Endothelial cell of umbilical vein (primary cell): ENCODE measurements at regions of chr9 and their contacts with region 1.

Region 1: DNA sequence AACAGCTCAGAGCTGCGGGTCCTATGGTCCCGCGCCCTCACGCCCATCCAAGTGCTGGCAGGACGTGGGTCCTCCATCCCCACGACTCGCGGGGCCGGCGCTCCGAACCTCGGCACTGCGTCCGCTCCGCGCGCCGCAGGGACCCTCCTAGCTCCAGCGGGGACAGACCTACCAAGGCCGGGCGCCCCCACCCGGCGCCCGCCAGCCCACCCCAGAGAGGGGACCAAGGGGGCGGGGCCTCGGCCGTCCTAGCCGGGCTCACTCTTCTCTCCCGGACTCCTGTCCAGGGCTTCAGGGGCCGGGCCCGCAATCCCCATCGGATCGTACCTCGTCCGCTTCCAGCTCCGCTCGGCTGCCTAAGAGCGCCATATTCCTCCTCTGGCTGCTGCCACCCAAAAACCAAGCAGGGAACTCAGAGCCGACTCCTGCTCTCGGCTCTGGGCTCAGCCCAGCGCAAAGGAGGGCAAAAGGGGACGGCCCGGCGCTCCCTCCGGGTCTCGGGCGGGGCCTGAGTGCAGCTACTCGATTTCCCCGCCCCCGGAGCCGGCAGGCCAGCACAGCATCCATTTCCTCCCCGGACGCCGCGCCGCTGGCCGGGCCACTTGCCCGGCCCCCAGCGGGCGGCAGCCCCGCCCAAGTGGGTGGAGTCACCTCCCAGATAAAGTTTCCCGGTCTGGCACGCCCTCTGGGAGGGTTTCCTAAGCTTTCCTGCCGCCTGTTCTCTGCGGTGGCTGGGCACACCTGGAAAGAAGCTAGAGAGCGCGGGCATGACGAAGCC is at the start of gene TTC39B:
- DNase-seq: peak; percentile 91
- H3K4me3 ChIP-seq: peak within 1 kb of the TSS; percentile 57 to 63 (median 59)
- H3K27ac ChIP-seq: peak within 1 kb of the TSS; percentile 14
- H3K4me1 ChIP-seq: peaks cover 4% of the 10 kb centered on the region
- H3K27me3 ChIP-seq: no peaks in the 10 kb centered on the region
- CTCF ChIP-seq: peak in 1 of 2 donors; percentile 2
- POLR2A ChIP-seq: peak; percentile 69
- total RNA-seq, gene TTC39B: 5.4 and 6.8 TPM in 2 replicates

Region 2: DNA sequence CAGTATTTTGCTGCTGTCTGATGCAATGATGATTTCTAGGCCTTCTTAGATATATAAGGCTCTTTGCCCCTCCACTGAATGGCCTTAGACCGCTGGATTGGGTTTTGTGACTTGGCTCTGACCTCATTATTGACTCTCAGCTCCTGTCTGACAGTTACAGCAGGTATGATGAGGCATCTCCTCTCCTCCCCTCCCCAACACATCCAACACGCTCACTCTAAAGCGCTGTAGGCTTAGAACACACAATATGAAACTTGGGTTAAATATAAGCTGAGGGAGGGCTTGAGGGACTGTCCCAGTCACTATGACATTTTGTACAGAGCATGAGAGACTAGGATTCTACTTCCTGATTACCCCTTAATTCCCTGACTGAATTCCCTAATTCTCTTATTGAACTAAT is 565.6 kb before region 1 on chr9:
- CTCF ChIA-PET with region 1: no interaction called
- POLR2A ChIA-PET with region 1: no interaction called
- dilution Hi-C with region 1: no loop called
- intact Hi-C with region 1: no loop called
- DNase-seq: no peak
- H3K4me3 ChIP-seq: no peak overlapping the region
- H3K27ac ChIP-seq: no peak overlapping the region
- H3K4me1 ChIP-seq: peaks cover 13% of the 10 kb centered on the region
- H3K27me3 ChIP-seq: no peaks in the 10 kb centered on the region
- CTCF ChIP-seq: no peak
- POLR2A ChIP-seq: no peak

Region 3: GRCh38 chr9:15211160-15211814 is 95.7 kb before region 1 on chr9:
- CTCF ChIA-PET with region 1: interaction called, 3 read pairs
- POLR2A ChIA-PET with region 1: no interaction called
- dilution Hi-C with region 1: no loop called
- intact Hi-C with region 1: loop called (anchors 1 kb)
- DNase-seq: peak; percentile 80
- H3K4me3 ChIP-seq: no peak overlapping the region
- H3K27ac ChIP-seq: no peak overlapping the region
- H3K4me1 ChIP-seq: peaks cover 3% of the 10 kb centered on the region
- H3K27me3 ChIP-seq: no peaks in the 10 kb centered on the region
- CTCF ChIP-seq: peak; percentile 79 to 81
- POLR2A ChIP-seq: no peak

Region 4: GRCh38 chr9:15249042-15249818 is 57.7 kb before region 1 on chr9:
- CTCF ChIA-PET with region 1: no interaction called
- POLR2A ChIA-PET with region 1: no interaction called
- dilution Hi-C with region 1: no loop called
- intact Hi-C with region 1: loop called (anchors 1 kb)
- DNase-seq: peak; percentile 69
- H3K4me3 ChIP-seq: no peak overlapping the region
- H3K27ac ChIP-seq: peak overlapping the region; percentile 68
- H3K4me1 ChIP-seq: peaks cover 42% of the 10 kb centered on the region
- H3K27me3 ChIP-seq: no peaks in the 10 kb centered on the region
- CTCF ChIP-seq: no peak
- POLR2A ChIP-seq: no peak

Region 5: GRCh38 chr9:15295761-15296405 is 11.1 kb before region 1 on chr9:
- CTCF ChIA-PET with region 1: interaction called, 9 read pairs
- POLR2A ChIA-PET with region 1: no interaction called
- dilution Hi-C with region 1: no loop called
- intact Hi-C with region 1: loop called (anchors 1 kb)
- DNase-seq: peak; percentile 87
- H3K4me3 ChIP-seq: peak overlapping the region; percentile 29 to 85 (median 55)
- H3K27ac ChIP-seq: peak overlapping the region; percentile 90
- H3K4me1 ChIP-seq: peaks cover 9% of the 10 kb centered on the region
- H3K27me3 ChIP-seq: no peaks in the 10 kb centered on the region
- CTCF ChIP-seq: no peak
- POLR2A ChIP-seq: no peak

Region 6: GRCh38 chr9:15404171-15404570 is 97.2 kb after region 1 on chr9:
- CTCF ChIA-PET with region 1: no interaction called
- POLR2A ChIA-PET with region 1: no interaction called
- dilution Hi-C with region 1: no loop called
- intact Hi-C with region 1: no loop called
- DNase-seq: no peak
- H3K4me3 ChIP-seq: no peak overlapping the region
- H3K27ac ChIP-seq: no peak overlapping the region
- H3K4me1 ChIP-seq: no peaks in the 10 kb centered on the region
- H3K27me3 ChIP-seq: no peaks in the 10 kb centered on the region
- CTCF ChIP-seq: no peak
- POLR2A ChIP-seq: no peak

Region 7: DNA sequence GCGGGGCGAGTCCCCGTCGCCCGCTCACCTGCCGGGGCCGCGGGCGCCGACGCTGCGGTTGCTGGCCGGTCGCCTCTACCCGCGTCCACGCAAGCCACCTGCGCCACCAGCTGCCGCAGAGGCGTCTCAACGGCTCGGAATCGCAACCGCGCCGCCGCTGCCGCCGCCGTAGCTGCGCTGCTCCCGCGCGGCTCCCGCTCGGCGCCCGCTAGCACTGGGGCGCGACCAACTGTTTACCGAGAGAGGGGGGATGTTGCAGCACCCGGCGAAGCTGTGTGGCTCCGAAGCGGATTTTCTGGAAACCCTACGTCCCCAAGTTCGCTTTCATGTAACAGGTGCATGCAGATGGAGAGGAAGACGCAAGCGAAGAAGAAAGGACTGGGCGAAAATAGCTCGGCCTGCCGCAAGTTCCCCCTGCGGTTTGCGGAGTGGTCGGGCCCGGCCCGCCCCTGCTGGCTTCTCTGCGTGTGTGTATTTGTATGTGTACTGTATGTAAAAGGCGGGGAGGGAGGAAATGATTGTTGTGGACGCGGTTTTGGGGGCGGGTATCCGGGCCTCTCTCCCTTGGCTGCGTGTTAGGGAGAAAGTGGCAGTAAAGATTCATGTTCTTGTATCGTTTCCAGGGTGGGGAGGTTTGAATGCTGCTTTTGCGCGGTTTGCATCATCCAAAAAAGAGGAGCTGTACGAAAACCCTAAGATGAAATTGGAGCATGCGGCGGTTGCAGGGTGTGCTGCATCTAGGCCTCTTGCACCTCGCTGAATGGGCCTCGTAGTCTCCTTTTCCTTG is 204.0 kb after region 1 on chr9 and contains the start of gene PSIP1:
- CTCF ChIA-PET with region 1: interaction called, 3 read pairs
- POLR2A ChIA-PET with region 1: no interaction called
- dilution Hi-C with region 1: no loop called
- intact Hi-C with region 1: loop called (anchors 5 kb)
- DNase-seq: peak; percentile 87
- H3K4me3 ChIP-seq: peak within 1 kb of the TSS; percentile 76 to 91 (median 77)
- H3K27ac ChIP-seq: peak within 1 kb of the TSS; percentile 99
- H3K4me1 ChIP-seq: peaks cover 19% of the 10 kb centered on the region
- H3K27me3 ChIP-seq: no peaks in the 10 kb centered on the region
- CTCF ChIP-seq: no peak
- POLR2A ChIP-seq: peak; percentile 78
- total RNA-seq, gene PSIP1: 69.5 and 76.7 TPM in 2 replicates